KBM-7 (cell line): ENCODE measurements at regions of chr4 and their contacts with region 1.

Region 1: GRCh38 chr4:89254847-89255246 is 52.8 kb downstream of the GPRIN3 start:
- DNase-seq: peak; percentile 19

Region 2: GRCh38 chr4:88908003-88908402 is 346.8 kb before region 1 on chr4:
- in situ Hi-C with region 1: no loop called
- DNase-seq: no peak

Region 3: GRCh38 chr4:89434364-89434988 is 179.6 kb after region 1 on chr4:
- in situ Hi-C with region 1: loop called (anchors 25 kb)
- DNase-seq: peak; percentile 47

Region 4: GRCh38 chr4:89657931-89658700 is 403.3 kb after region 1 on chr4:
- in situ Hi-C with region 1: no loop called
- DNase-seq: peak; percentile 19